Prostate gland (tissue), 2 donors: ENCODE measurements at regions of chr15 and their contacts with region 1.

Region 1: DNA sequence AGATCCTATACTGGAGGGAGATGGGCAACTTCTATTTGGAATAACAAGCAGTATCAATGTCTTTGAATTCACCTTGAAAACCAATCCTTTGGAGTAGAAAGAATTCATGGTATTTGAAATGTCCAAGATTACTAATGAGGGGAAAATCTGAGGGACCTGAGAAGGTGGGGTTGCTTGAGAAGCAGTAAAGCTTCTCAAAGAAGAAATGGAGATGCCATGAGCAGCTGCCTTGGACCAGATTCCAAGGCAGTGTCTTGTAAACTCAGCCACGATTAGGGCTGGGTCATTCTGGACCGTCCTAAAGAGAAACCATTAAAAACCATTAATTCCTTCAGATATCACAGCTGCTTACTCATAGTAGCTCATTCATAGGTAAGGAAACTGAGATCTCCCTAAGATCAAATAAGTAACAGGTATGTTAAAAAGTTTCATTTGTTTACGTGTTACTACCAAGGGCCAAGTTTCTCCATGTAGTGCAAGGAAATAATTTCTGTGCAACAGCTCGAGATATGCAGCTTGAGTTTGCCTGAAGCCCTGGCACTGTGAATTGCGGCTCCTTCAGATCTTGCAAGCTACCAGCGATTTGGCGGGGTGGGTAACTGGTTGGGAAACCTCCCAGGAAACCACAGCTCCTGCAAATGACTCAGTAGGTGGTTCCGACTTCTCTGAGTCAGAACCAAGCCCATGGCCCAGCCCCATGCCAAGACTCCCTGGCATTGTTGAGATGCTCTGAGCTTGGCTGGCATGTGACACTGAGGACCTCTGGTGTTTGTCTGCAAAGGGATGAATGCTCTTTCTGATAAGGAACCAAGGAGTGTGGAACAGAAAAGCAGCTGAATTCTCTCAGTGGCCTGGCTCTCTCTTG is 296.8 kb downstream of the RORA start:
- DNase-seq: peak; percentile 16
- H3K4me3 ChIP-seq: no peak overlapping the region
- H3K27ac ChIP-seq: no peak overlapping the region
- H3K4me1 ChIP-seq: no peaks in the 10 kb centered on the region
- H3K27me3 ChIP-seq: no peaks in the 10 kb centered on the region
- CTCF ChIP-seq: peak in 1 of 4 experiments; percentile 33
- POLR2A ChIP-seq: no peak

Region 2: GRCh38 chr15:61038387-61038786 is 106.1 kb after region 1 on chr15:
- intact Hi-C with region 1: loop called (anchors 10 kb)
- DNase-seq: no peak
- H3K4me3 ChIP-seq: no peak overlapping the region
- H3K27ac ChIP-seq: no peak overlapping the region
- H3K4me1 ChIP-seq: no peaks in the 10 kb centered on the region
- H3K27me3 ChIP-seq: no peaks in the 10 kb centered on the region
- CTCF ChIP-seq: no peak
- POLR2A ChIP-seq: no peak